ENCODE measurements at regions of chr12 and their contacts with region 1.

Region 1: GRCh38 chr12:69570545-69571399 is 14.5 kb upstream of the CCT2 start:
- DNase-seq: no peak
- ATAC-seq: peak; percentile 80

Region 2: GRCh38 chr12:69196302-69197288 is 374.2 kb before region 1 on chr12:
- intact Hi-C with region 1: no loop called
- DNase-seq: no peak
- ATAC-seq: no peak

Region 3: DNA sequence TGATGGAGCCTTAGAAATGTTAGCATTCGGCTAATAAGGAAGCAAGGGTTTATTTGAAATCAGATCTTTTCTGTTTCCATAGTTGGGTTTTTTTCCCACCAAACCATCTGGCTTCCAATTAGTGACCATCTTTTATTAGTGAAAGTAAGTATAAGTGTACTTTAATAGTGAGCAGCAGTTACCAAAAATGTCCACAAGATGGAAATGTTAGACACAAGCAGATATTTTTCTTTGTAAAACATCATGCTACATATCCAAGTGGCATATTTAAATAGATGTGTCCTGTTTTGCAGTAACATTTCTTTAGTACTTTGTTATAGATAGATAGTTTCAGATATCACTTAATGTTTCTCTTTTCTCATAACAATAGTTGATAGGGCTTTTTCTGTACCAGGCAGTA is 182.4 kb before region 1 on chr12:
- intact Hi-C with region 1: loop called (anchors 10 kb)
- DNase-seq: no peak
- ATAC-seq: peak; percentile 59

Region 4: GRCh38 chr12:69415471-69416275 is 155.1 kb before region 1 on chr12:
- intact Hi-C with region 1: loop called (anchors 5 kb)
- DNase-seq: peak; percentile 61
- ATAC-seq: peak; percentile 92

Region 5: DNA sequence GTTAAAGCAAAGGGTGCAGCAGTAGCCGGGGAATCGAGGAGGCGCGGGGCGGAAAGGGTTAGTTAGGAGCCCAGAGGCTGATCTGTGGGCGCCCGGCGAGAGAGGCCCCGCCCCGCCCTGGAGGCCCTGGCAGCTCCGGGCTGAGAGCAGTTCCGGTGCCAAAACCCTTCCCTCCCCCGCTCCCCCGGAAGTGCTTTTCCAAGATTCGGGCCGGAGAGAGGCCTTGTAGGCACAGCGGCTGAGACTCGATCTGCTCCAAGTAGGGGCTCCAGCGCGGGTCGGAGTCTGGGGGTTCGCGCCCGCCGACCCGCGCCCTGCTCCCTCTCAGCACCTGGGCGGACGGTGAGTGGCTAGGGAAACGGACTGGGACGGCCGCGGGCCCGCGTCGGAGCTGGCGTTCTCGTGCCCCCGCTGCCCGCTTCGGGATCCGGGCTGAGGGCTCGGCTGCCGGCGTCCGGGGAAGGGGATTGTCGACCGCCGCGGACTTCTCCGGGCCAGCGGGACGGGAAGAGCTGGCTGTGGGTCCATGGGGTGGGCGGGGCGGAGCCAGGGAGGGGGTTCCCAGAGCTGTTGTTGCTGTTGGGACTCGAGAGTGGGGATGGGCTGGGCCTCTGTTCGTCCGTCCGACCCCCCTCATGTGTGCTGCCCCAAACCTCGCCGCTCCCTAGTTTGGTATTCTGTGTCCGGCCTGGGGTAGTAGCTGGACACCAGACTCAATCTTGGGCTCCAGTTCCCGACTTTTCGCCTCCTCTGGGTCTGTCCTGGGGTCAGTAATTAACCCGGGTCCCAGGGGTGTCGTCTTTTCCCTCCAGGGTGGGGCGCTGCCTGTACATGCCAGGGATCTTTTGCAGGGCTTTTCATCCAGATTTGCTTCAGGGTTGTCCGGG is 100.3 kb before region 1 on chr12 and contains the start of gene FRS2:
- intact Hi-C with region 1: loop called (anchors 5 kb)
- DNase-seq: peak; percentile 94
- ATAC-seq: peak; percentile 99
- total RNA-seq, gene FRS2: 18.0 TPM

Measured in Right ventricle myocardium superior (tissue), 1 donor.